MCF 10A (cell line): ENCODE measurements at regions of chr12 and their contacts with region 1.

Region 1: DNA sequence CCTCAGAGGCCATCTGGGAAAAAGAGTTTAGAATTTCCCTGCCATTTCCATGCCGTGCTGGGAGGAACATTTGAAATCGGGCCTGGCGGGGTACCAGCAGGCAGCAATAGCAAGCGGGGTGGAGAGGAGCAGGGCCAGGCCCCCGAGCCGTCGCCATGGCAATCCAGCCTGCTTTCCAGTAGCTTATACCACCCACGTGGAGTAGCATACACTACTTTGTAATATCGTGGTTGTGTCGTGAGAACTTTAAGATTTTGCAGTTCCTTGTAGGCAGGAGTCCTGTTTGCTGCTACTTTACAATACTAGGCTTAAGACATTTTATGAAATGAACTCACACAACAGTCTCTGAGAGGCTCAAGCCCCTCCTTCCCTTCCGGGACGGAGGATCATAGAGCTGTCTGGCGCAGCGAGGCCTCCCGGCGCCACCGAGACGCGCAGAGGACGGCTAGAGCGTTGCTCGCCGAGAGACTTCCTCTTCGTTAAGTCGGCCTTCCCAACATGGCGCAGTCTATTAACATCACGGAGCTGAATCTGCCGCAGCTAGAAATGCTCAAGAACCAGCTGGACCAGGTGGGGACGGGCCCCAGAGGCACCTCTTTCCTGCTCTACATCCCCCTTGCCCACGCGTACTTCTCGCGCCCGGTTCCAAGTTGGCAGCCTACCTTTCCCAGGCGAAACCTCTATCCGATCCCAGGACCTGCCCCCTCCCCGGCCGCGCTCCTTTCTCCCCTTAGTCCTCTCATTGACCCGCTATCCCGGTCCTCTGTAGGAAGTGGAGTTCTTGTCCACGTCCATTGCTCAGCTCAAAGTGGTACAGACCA is at the start of gene PFDN5:
- DNase-seq: peak; percentile 85
- H3K4me3 Mint-ChIP-seq: peak within 1 kb of the TSS; percentile 95
- H3K27ac Mint-ChIP-seq: peak within 1 kb of the TSS; percentile 97
- H3K4me1 Mint-ChIP-seq: peaks cover 20% of the 10 kb centered on the region
- H3K27me3 Mint-ChIP-seq: no peaks in the 10 kb centered on the region
- CTCF ChIP-seq: no peak
- total RNA-seq, gene PFDN5: 205 and 229 TPM in 2 replicates

Region 2: GRCh38 chr12:53159195-53159839 is 136.0 kb before region 1 on chr12:
- CTCF ChIA-PET with region 1: interaction called, 54 read pairs
- POLR2A ChIA-PET with region 1: interaction called, 4 read pairs
- intact Hi-C with region 1: no loop called
- DNase-seq: peak; percentile 85
- H3K4me3 Mint-ChIP-seq: no peak overlapping the region
- H3K27ac Mint-ChIP-seq: no peak overlapping the region
- H3K4me1 Mint-ChIP-seq: peaks cover 8% of the 10 kb centered on the region
- H3K27me3 Mint-ChIP-seq: no peaks in the 10 kb centered on the region
- CTCF ChIP-seq: peak; percentile 94

Region 3: DNA sequence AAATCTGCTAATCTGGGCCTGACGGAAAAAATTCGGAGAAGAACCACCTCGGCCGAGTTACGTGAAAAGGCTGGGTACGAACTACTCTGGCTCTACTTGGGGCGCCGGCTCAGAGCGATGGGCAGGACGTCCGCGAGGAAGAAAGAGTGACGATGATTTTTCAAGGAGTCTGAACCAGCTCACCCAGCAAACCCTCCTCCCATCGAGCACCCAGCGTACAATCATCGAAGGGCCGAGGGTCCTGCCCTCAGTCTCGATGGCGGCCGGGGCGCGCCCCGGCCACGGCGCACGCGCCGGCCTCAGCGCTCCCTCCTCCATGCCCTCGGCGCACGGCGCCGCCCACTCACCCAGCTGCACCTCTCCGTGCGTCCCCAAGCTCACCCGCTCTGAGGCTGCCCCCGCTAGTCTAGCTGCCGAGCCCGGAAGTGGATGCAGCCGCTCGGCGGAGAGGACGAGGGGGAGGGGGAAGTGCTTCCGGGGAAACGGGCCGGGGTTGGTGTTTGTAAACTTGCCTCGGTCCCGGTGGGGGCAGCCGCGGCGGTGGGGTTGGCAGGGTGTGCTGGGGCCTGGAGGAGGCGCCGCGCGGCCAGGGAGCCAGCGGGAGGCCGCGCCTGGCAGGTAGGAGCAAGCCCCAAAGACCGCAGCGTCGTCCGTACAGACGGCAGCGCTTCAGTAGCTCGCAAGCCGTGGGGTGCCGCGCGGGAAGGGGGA is 114.9 kb before region 1 on chr12 and contains the starts of genes CSAD and ZNF740:
- CTCF ChIA-PET with region 1: no interaction called
- POLR2A ChIA-PET with region 1: interaction called, 16 read pairs
- intact Hi-C with region 1: no loop called
- DNase-seq: peak; percentile 96
- H3K4me3 Mint-ChIP-seq: peak within 1 kb of the TSS; percentile 95
- H3K27ac Mint-ChIP-seq: peak within 1 kb of the TSS; percentile 94
- H3K4me1 Mint-ChIP-seq: peaks cover 29% of the 10 kb centered on the region
- H3K27me3 Mint-ChIP-seq: no peaks in the 10 kb centered on the region
- CTCF ChIP-seq: no peak
- total RNA-seq, gene CSAD: 22.7 and 30.8 TPM in 2 replicates
- total RNA-seq, gene ZNF740: 34.9 and 36.2 TPM in 2 replicates

Region 4: DNA sequence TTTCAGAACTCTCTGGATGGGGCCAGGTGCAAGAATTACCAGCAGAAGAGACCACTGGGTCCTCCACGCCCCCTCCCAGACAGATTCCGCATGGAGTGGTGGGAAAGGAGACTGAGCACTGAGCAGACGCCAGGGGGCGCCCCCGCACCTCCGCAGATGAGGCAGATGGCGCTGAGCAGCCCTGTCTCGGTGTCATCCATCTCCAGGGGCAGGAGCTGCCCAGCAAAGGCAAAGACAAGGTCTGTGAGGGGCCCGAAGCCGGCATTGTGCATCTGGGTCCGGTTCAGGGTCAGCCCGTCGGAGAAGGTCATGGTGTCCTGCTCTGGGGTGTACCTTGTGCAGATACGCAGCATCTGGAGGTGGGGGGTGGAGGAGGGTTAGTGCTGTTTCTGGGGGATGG is 81.9 kb before region 1 on chr12:
- CTCF ChIA-PET with region 1: interaction called, 275 read pairs
- POLR2A ChIA-PET with region 1: interaction called, 16 read pairs
- intact Hi-C with region 1: no loop called
- DNase-seq: peak; percentile 72
- H3K4me3 Mint-ChIP-seq: no peak overlapping the region
- H3K27ac Mint-ChIP-seq: no peak overlapping the region
- H3K4me1 Mint-ChIP-seq: peaks cover 24% of the 10 kb centered on the region
- H3K27me3 Mint-ChIP-seq: no peaks in the 10 kb centered on the region
- CTCF ChIP-seq: peak; percentile 93

Region 5: DNA sequence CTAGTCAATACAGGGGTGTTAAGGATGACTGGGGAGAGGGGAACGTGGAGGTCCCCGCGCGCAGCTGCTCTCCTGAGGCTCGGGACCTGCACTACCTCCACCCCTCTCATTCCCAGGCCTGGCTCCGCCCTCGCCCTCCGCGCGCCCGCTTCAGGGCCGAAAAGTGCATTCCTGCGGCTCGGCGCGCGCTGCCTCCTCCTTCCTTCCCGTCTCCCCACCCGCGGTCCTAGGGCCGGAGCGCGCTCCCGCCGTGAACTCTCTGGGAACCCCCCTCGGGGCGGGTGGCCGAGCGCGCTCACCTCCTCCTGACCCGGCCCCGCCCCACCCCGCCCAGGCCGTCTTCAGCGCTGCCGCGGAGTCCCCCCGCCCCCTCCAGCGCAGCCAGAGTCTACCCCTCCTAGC is 74.5 kb before region 1 on chr12:
- CTCF ChIA-PET with region 1: interaction called, 275 read pairs
- POLR2A ChIA-PET with region 1: interaction called, 16 read pairs
- intact Hi-C with region 1: no loop called
- DNase-seq: peak; percentile 93
- H3K4me3 Mint-ChIP-seq: peak overlapping the region; percentile 83
- H3K27ac Mint-ChIP-seq: peak overlapping the region; percentile 80
- H3K4me1 Mint-ChIP-seq: peaks cover 69% of the 10 kb centered on the region
- H3K27me3 Mint-ChIP-seq: no peaks in the 10 kb centered on the region
- CTCF ChIP-seq: no peak

Region 6: DNA sequence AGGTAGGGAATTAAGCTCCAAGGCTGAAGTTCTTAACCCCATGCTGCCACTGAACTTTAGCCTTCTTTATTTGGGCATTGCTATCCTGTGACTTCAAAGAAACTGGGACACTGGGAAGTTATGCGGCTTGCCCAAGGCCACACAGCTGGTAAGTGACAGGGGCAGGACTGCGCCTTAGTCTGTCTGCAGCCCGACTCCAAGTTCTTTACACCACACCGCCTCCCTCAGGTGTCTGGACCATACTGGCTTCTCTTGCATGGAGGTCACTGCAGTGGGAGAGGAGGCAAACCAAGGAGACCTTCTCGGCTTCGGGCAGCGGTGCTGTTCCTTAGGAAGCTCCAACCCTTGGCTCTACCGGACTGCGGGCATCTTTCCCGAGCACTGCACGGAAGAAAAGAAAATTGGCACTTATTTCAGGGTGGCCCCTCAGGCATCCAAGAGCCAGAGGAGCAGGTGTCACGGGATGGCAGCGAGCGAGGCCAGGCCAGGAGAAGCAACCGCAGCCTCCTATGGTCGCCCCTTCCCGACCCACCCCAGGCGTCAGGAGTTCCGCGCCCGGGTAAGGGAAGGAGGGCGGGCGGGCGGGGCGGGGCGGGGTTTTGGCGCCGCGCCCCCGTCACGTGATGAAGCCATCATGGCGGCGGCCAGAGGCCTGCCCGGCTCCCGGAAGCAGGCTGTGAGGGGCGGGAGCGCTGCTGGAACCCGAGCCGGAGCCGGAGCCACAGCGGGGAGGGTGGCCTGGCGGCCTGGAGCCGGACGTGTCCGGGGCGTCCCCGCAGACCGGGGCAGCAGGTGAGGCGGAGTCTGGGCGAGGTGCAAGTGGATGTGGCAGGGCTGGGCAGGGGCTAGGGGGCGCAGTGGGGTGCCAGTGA is 43.6 kb before region 1 on chr12:
- CTCF ChIA-PET with region 1: interaction called, 5 read pairs
- POLR2A ChIA-PET with region 1: interaction called, 17 read pairs
- intact Hi-C with region 1: no loop called
- DNase-seq: peak; percentile 77
- H3K4me3 Mint-ChIP-seq: peak overlapping the region; percentile 87
- H3K27ac Mint-ChIP-seq: peak overlapping the region; percentile 83
- H3K4me1 Mint-ChIP-seq: peaks cover 25% of the 10 kb centered on the region
- H3K27me3 Mint-ChIP-seq: no peaks in the 10 kb centered on the region
- CTCF ChIP-seq: peak; percentile 48

Region 7: GRCh38 chr12:53267999-53268647 is 27.2 kb before region 1 on chr12 and contains the start of gene ESPL1:
- CTCF ChIA-PET with region 1: interaction called, 29 read pairs
- POLR2A ChIA-PET with region 1: interaction called, 14 read pairs
- intact Hi-C with region 1: no loop called
- DNase-seq: peak; percentile 71
- H3K4me3 Mint-ChIP-seq: peak within 1 kb of the TSS; percentile 90
- H3K27ac Mint-ChIP-seq: peak within 1 kb of the TSS; percentile 76
- H3K4me1 Mint-ChIP-seq: peaks cover 15% of the 10 kb centered on the region
- H3K27me3 Mint-ChIP-seq: no peaks in the 10 kb centered on the region
- CTCF ChIP-seq: no peak
- total RNA-seq, gene ESPL1: 9.8 and 12.1 TPM in 2 replicates

Region 8: DNA sequence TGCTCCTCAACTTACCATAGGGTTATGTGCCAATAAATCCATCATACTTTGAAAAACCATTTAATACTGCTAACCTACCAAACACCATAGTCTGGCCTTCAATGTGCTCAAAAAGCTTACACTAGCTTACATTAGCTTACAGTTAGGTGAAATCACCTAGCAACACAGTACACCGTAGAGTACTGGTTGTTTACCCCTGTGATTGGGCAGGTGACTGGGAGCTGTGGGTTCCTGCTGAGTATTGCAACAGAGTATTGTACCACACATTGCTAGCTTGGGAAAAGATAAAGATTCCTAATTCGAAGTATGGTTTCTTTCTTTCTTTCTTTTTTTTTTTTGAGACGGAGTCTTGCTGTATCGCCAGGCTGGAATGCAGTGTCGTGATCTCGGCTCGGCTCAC is 375.0 kb after region 1 on chr12:
- CTCF ChIA-PET with region 1: no interaction called
- POLR2A ChIA-PET with region 1: no interaction called
- intact Hi-C with region 1: no loop called
- DNase-seq: peak; percentile 17
- H3K4me3 Mint-ChIP-seq: no peak overlapping the region
- H3K27ac Mint-ChIP-seq: no peak overlapping the region
- H3K4me1 Mint-ChIP-seq: peaks cover 6% of the 10 kb centered on the region
- H3K27me3 Mint-ChIP-seq: no peaks in the 10 kb centered on the region
- CTCF ChIP-seq: no peak